ENCODE measurements at regions of chr6 and their contacts with region 1.

Region 1: GRCh38 chr6:26270903-26271667 is 93.9 kb upstream of the BTN3A2 start:
- DNase-seq: peak; percentile 50 to 89 (median 85)
- ATAC-seq: peak; percentile 24
- H3K4me3 ChIP-seq: peak overlapping the region; percentile 83
- H3K4me3 Mint-ChIP-seq: no peak overlapping the region
- H3K27ac ChIP-seq: peak overlapping the region; percentile 82
- H3K27ac Mint-ChIP-seq: peak overlapping the region in 2 of 9 donors; percentile 10 to 91
- H3K4me1 ChIP-seq: peaks cover 6 to 27% of the 10 kb centered on the region in 2 donors
- H3K4me1 Mint-ChIP-seq: peaks cover 0 to 34% (median 15%) of the 10 kb centered on the region in 7 donors
- H3K27me3 ChIP-seq: no peaks in the 10 kb centered on the region
- H3K27me3 Mint-ChIP-seq: no peaks in the 10 kb centered on the region

Region 2: DNA sequence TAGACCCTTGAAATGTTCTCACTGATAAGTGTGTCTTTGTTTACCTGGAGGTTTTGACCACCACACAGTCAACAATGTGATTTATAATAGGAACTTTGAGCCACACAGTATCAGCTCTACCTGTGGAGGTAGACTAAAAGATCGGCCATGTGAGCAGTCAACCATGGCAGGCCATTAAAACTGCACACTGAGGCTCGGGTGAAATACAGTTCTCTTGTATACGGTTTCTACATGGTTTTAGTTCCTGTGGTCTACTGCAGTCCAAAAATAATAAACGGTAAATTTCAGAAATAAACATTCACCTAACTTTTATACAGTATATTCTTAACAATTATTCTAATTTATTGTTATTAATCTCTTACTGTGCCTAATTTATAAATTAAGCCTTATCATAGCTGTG is 261.3 kb before region 1 on chr6:
- CTCF ChIA-PET with region 1: no interaction called
- POLR2A ChIA-PET with region 1: no interaction called
- intact Hi-C with region 1: no loop called
- DNase-seq: no peak
- ATAC-seq: no peak
- H3K4me3 ChIP-seq: no peak overlapping the region
- H3K4me3 Mint-ChIP-seq: no peak overlapping the region
- H3K27ac ChIP-seq: no peak overlapping the region
- H3K27ac Mint-ChIP-seq: no peak overlapping the region
- H3K4me1 ChIP-seq: no peaks in the 10 kb centered on the region
- H3K4me1 Mint-ChIP-seq: peaks cover 0 to 15% (median 10%) of the 10 kb centered on the region in 7 donors
- H3K27me3 ChIP-seq: no peaks in the 10 kb centered on the region
- H3K27me3 Mint-ChIP-seq: no peaks in the 10 kb centered on the region

Region 3: DNA sequence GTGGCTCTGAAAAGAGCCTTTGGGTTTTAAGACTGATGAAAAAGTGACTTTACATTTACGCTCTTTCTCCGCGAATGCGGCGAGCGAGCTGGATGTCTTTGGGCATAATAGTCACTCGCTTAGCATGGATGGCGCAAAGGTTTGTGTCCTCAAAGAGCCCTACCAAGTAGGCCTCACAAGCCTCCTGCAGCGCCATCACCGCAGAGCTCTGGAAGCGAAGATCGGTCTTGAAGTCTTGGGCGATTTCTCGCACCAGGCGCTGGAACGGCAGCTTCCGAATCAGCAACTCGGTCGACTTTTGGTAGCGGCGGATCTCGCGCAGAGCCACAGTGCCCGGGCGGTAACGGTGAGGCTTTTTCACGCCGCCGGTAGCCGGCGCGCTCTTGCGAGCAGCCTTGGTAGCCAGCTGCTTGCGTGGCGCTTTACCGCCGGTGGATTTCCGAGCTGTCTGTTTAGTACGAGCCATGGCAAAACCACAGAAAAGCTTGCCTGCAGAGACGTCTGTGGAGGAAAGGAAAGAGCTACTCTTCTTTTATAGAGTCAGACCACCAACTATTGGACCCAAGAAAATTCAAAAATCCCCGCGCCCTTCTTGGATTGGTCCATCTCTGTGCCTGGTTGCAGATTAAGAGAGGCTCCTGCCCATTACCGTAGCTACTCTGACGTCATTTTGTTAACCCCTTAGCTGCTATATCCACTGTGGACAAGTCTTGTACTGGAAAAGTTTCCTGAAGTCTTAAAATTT is 239.3 kb before region 1 on chr6:
- CTCF ChIA-PET with region 1: no interaction called
- POLR2A ChIA-PET with region 1: interaction called, 34 read pairs
- intact Hi-C with region 1: loop called in 1 of 2 experiments (anchors 2 kb)
- DNase-seq: peak; percentile 56 to 94 (median 90)
- ATAC-seq: peak; percentile 79
- H3K4me3 ChIP-seq: peak overlapping the region; percentile 70
- H3K4me3 Mint-ChIP-seq: peak overlapping the region; percentile 89 to 98 (median 96)
- H3K27ac ChIP-seq: peak overlapping the region; percentile 69
- H3K27ac Mint-ChIP-seq: peak overlapping the region; percentile 93 to 98 (median 96)
- H3K4me1 ChIP-seq: peaks cover 23 to 31% of the 10 kb centered on the region in 2 donors
- H3K4me1 Mint-ChIP-seq: peaks cover 14 to 69% (median 43%) of the 10 kb centered on the region in 7 donors
- H3K27me3 ChIP-seq: no peaks in the 10 kb centered on the region
- H3K27me3 Mint-ChIP-seq: peaks cover 0 to 7% (median 0%) of the 10 kb centered on the region in 5 donors

Region 4: GRCh38 chr6:26183581-26184366 is 87.3 kb before region 1 on chr6:
- CTCF ChIA-PET with region 1: interaction called, 3 read pairs
- POLR2A ChIA-PET with region 1: interaction called, 132 read pairs
- intact Hi-C with region 1: loop called in 1 of 2 experiments (anchors 2 kb)
- DNase-seq: peak; percentile 43 to 83 (median 77)
- ATAC-seq: peak; percentile 91
- H3K4me3 ChIP-seq: peak overlapping the region; percentile 82
- H3K4me3 Mint-ChIP-seq: peak overlapping the region; percentile 84 to 99 (median 98)
- H3K27ac ChIP-seq: peak overlapping the region; percentile 76
- H3K27ac Mint-ChIP-seq: peak overlapping the region; percentile 83 to 99 (median 90)
- H3K4me1 ChIP-seq: peaks cover 13 to 30% of the 10 kb centered on the region in 2 donors
- H3K4me1 Mint-ChIP-seq: peaks cover 19 to 59% (median 49%) of the 10 kb centered on the region in 7 donors
- H3K27me3 ChIP-seq: no peaks in the 10 kb centered on the region
- H3K27me3 Mint-ChIP-seq: no peaks in the 10 kb centered on the region

Region 5: GRCh38 chr6:26249957-26250697 is 21.0 kb before region 1 on chr6:
- CTCF ChIA-PET with region 1: interaction called, 49 read pairs
- POLR2A ChIA-PET with region 1: interaction called, 86 read pairs
- intact Hi-C with region 1: loop called (anchors 1 kb)
- DNase-seq: peak; percentile 53 to 85 (median 80)
- ATAC-seq: peak; percentile 85
- H3K4me3 ChIP-seq: peak overlapping the region; percentile 84
- H3K4me3 Mint-ChIP-seq: peak overlapping the region; percentile 88 to 100 (median 96)
- H3K27ac ChIP-seq: peak overlapping the region; percentile 71
- H3K27ac Mint-ChIP-seq: peak overlapping the region; percentile 85 to 97 (median 94)
- H3K4me1 ChIP-seq: peaks cover 4 to 19% of the 10 kb centered on the region in 2 donors
- H3K4me1 Mint-ChIP-seq: peaks cover 20 to 48% (median 39%) of the 10 kb centered on the region in 7 donors
- H3K27me3 ChIP-seq: no peaks in the 10 kb centered on the region
- H3K27me3 Mint-ChIP-seq: no peaks in the 10 kb centered on the region

Region 6: DNA sequence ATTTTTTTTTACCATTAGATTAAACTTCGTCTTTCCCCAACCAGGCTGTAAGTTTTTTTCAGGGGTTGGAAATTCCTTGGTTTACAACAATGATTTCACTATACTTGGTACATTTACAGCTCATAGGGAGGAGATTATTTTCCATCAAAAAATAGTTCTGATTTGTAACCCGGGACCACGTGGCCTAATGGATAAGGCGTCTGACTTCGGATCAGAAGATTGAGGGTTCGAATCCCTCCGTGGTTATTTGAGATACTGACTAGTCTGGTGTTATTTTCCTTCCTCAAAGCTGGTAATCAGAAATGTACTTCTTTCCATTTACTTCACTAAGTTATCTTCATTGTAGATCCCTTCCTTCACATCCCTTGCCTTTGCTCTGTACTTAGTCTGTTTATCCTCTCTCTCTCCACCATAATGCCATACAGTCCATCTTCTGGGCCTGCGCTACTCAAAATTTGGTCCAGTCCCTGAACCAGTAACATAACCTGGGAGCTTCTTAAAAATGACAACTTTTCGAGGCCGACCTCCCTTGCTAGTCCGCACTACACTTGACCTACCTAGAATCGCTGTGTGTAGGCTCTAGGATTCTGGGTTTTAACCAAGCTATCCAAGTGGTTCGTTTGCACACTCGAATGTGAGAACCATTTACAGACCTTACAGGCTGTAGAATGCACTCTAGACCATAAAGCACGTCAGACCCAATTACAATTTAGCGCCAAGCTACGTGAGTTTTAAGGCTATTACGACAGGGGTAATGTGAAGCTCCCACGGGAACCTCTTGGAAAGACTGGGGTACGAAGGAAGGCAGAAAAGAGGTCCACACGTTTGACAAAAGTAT is 51.8 kb after region 1 on chr6:
- CTCF ChIA-PET with region 1: interaction called, 3 read pairs
- POLR2A ChIA-PET with region 1: interaction called, 27 read pairs
- intact Hi-C with region 1: no loop called
- DNase-seq: peak in 8 of 9 donors; percentile 67 to 85 (median 79)
- ATAC-seq: peak; percentile 72
- H3K4me3 ChIP-seq: peak overlapping the region; percentile 82
- H3K4me3 Mint-ChIP-seq: peak overlapping the region; percentile 64 to 92 (median 88)
- H3K27ac ChIP-seq: peak overlapping the region; percentile 60
- H3K27ac Mint-ChIP-seq: peak overlapping the region; percentile 44 to 93 (median 89)
- H3K4me1 ChIP-seq: peaks cover 5 to 8% of the 10 kb centered on the region in 2 donors
- H3K4me1 Mint-ChIP-seq: peaks cover 2 to 58% (median 36%) of the 10 kb centered on the region in 7 donors
- H3K27me3 ChIP-seq: no peaks in the 10 kb centered on the region
- H3K27me3 Mint-ChIP-seq: peaks cover 5 to 21% (median 17%) of the 10 kb centered on the region in 5 donors

Region 7: GRCh38 chr6:27809939-27810767 is 1539.1 kb after region 1 on chr6:
- CTCF ChIA-PET with region 1: no interaction called
- POLR2A ChIA-PET with region 1: interaction called, 11 read pairs
- intact Hi-C with region 1: loop called in 1 of 2 experiments (anchors 1 kb)
- DNase-seq: peak; percentile 66 to 96 (median 92)
- ATAC-seq: peak; percentile 71
- H3K4me3 ChIP-seq: peak overlapping the region; percentile 76
- H3K4me3 Mint-ChIP-seq: peak overlapping the region; percentile 81 to 97 (median 94)
- H3K27ac ChIP-seq: peak overlapping the region; percentile 86
- H3K27ac Mint-ChIP-seq: peak overlapping the region; percentile 95 to 99 (median 98)
- H3K4me1 ChIP-seq: peaks cover 20 to 42% of the 10 kb centered on the region in 2 donors
- H3K4me1 Mint-ChIP-seq: peaks cover 18 to 82% (median 61%) of the 10 kb centered on the region in 7 donors
- H3K27me3 ChIP-seq: no peaks in the 10 kb centered on the region
- H3K27me3 Mint-ChIP-seq: peaks cover 0 to 9% (median 0%) of the 10 kb centered on the region in 5 donors